Prostate gland (tissue), 2 donors: ENCODE measurements at regions of chr15 and their contacts with region 1.

Region 1: DNA sequence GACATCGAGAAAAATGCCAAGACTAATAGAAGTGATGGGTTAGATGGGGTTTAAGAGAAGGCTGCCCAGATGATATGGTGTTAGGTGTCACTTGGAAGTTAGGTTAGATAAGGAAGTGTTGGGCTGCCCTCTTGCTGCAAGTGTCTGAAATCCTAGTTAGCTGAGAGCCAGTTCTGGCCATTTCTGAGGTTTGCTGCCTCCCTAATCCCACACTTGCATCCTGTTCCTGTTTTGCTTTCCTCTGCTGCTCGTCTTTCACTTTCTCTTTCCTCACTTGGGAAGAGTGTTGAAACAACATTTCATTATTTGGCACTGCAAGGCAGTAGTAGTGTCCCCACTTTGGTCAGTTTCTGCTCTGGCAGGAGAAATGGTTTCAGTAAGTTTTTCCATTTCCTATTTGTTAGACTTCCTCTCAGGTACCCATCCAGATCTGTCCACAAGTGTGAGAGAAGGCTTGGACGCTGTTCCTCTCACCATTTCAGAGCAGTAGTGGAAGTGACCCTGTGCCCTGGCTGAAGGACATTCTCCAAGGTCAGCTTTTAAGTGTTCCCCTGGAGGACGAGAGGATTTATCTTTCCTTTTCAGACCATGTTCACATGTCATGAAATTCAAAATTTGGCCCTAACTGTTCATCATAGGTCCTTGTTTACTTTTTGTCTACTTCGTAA is 93.3 kb downstream of the ADAMTSL3 start:
- DNase-seq: peak; percentile 12
- H3K4me3 ChIP-seq: no peak overlapping the region
- H3K27ac ChIP-seq: peak overlapping the region in 1 of 2 donors; percentile 20
- H3K4me1 ChIP-seq: no peaks in the 10 kb centered on the region
- H3K27me3 ChIP-seq: no peaks in the 10 kb centered on the region
- CTCF ChIP-seq: peak in 3 of 4 experiments; percentile 17 to 53 (median 47)
- POLR2A ChIP-seq: no peak

Region 2: DNA sequence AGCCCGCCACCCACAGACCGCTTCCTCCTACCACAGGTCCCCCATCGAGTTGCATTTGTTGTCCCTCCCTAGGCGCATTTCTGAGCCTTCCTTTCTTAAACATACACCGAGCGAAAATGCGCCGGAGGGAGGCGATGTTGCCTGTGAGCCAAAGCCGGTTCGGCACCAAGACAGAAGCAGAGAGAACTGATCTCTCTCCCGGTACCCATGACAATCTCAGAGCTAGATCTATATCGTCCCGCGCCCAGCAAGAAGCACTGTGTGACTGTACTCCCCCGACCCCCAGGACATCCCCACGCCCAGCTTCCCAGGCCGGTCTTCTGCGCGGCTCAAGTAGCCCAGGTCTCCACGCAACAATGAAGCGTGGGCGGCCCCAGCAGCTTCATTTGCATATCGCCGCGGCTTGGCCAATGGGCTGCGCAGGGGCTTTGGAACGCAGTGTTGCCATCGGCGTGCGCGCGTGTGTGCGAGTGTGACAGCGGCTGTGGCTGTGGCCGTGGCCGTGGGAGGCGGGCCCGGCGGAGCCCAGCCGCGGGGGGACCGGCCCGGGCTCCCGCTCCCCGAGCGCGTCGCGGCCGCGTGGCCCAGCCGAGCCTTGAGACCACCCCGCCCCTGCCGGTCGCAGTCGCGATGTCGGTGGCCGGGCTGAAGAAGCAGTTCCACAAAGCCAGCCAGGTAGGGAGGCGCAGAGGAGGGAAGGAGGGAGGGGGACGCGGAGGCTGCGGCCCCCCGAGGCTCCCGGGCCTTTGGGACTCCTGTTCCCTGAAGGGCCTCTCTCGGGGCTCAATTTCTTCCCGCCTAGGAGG is 300.1 kb before region 1 on chr15 and contains the start of gene SH3GL3:
- intact Hi-C with region 1: loop called (anchors 10 kb)
- DNase-seq: peak; percentile 81
- H3K4me3 ChIP-seq: peak within 1 kb of the TSS; percentile 31 to 40
- H3K27ac ChIP-seq: no peak within 1 kb of the TSS
- H3K4me1 ChIP-seq: peaks cover 6% of the 10 kb centered on the region
- H3K27me3 ChIP-seq: no peaks in the 10 kb centered on the region
- CTCF ChIP-seq: peak in 3 of 4 experiments; percentile 10 to 38 (median 29)
- POLR2A ChIP-seq: no peak
- total RNA-seq, gene SH3GL3: 2.2 to 7.4 TPM

Region 3: GRCh38 chr15:83571820-83572707 is 175.1 kb before region 1 on chr15:
- intact Hi-C with region 1: loop called (anchors 5 kb)
- DNase-seq: no peak
- H3K4me3 ChIP-seq: no peak overlapping the region
- H3K27ac ChIP-seq: no peak overlapping the region
- H3K4me1 ChIP-seq: no peaks in the 10 kb centered on the region
- H3K27me3 ChIP-seq: no peaks in the 10 kb centered on the region
- CTCF ChIP-seq: peak in 3 of 4 experiments; percentile 28 to 50 (median 41)
- POLR2A ChIP-seq: no peak

Region 4: DNA sequence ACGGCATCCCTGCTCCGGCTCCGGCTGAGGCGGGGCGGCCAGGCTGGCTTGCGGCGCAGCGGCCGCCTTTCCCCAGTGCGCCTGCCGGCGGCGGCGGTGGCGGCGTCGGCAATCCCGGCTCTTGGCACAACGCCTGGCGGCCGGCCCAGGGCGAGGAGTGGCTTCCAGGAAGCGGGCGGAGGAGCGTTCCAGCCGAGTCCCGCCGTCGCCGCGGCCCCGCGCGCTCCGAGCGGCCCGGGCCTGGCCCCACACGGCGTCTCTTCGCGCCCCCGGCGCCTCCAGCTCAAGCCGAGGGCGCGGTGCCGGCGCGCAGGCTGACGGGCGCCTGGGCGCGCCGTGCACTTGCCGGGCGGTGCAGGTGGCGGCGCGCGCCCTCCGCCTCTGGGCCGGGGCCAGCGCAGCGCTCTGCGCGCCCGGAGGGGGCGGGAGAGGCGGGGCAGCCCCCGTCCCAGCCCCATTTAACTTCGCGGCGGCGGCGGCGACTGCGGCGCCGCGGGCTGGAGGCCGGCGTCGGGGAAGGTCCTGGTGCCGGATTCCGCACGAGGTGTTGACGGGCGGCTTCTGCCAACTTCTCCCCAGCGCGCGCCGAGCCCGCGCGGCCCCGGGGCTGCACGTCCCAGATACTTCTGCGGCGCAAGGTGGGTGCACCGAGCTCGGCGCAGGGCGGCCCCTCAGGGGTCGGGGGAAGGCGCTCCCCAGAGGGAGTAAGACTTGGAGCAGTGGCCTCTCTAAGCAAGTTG is 93.4 kb before region 1 on chr15 and contains the start of gene ADAMTSL3:
- intact Hi-C with region 1: loop called (anchors 5 kb)
- DNase-seq: peak; percentile 76
- H3K4me3 ChIP-seq: peak within 1 kb of the TSS; percentile 28 to 36
- H3K27ac ChIP-seq: peak within 1 kb of the TSS; percentile 31 to 33
- H3K4me1 ChIP-seq: no peaks in the 10 kb centered on the region
- H3K27me3 ChIP-seq: no peaks in the 10 kb centered on the region
- CTCF ChIP-seq: peak in 1 of 4 experiments; percentile 35
- POLR2A ChIP-seq: no peak
- total RNA-seq, gene ADAMTSL3: 4.5 to 25.2 TPM

Region 5: GRCh38 chr15:84023636-84024035 is 276.5 kb after region 1 on chr15:
- intact Hi-C with region 1: loop called (anchors 5 kb)
- DNase-seq: peak; percentile 24
- H3K4me3 ChIP-seq: no peak overlapping the region
- H3K27ac ChIP-seq: no peak overlapping the region
- H3K4me1 ChIP-seq: no peaks in the 10 kb centered on the region
- H3K27me3 ChIP-seq: no peaks in the 10 kb centered on the region
- CTCF ChIP-seq: peak in 3 of 4 experiments; percentile 46 to 58 (median 47)
- POLR2A ChIP-seq: no peak

Region 6: DNA sequence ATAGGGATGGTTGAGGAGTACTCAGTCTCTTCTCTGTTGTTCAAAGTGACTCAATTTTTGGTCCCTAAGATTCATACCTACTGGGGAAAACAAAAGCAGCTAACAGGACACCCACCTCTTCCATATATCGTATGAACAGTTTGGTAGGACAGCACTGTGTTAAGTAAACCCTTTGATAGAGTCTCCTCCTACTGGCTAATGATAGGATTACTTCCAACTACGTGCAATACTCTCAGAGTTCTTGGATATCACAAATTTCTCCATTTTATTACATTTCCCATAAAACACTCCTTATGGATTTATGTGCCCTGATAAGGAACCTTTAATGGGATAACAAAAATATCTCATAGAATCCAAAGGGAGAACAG is 288.2 kb after region 1 on chr15:
- intact Hi-C with region 1: loop called (anchors 5 kb)
- DNase-seq: no peak
- H3K4me3 ChIP-seq: no peak overlapping the region
- H3K27ac ChIP-seq: no peak overlapping the region
- H3K4me1 ChIP-seq: no peaks in the 10 kb centered on the region
- H3K27me3 ChIP-seq: no peaks in the 10 kb centered on the region
- CTCF ChIP-seq: peak; percentile 20 to 61 (median 50)
- POLR2A ChIP-seq: no peak

Region 7: DNA sequence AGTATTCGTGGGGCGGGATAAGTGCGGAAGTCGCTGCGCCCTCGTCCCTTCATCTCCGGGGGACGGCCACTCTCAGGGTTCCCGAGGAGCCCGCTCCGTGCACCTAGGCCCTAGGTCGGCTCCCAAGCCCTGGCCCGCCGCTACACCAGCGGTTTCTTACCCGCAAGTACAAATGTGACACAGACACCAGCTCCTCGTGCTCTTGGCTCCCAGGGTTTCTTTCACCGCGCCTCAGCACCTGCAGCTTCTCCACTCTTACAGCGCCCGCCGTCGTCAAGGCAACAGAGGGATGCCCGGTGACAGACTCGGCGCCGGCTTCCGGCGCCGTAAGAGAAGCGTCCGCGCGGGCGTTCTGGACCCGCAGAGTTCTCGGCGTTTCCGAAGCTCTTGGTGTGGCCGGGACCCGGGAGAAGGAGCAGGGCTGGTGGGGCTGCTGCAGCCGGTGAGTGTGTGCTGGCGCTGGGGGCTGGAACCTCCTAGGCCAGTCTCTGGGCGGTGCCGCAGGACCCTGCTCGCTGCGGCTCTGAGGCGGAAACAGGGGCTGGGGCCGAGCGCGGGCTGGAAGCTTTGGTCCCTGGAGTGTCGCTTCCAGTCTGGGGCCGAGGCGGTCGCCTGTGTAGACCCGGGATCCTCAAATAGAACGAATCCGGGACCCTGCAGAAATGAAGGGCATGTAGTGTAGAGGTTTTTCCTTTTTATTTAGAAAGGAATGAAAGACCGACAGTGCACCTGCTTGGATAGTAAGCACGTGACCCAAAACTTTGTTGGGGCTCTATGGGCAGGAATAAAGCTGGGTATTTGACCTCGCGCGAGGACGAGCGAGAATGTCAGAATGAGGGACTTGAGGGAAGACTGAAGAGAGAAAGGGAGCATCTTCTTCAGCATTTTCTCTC is 332.9 kb after region 1 on chr15:
- intact Hi-C with region 1: no loop called
- DNase-seq: peak; percentile 5
- H3K4me3 ChIP-seq: peak overlapping the region; percentile 22 to 24
- H3K27ac ChIP-seq: no peak overlapping the region
- H3K4me1 ChIP-seq: no peaks in the 10 kb centered on the region
- H3K27me3 ChIP-seq: peaks cover 4% of the 10 kb centered on the region
- CTCF ChIP-seq: no peak
- POLR2A ChIP-seq: no peak